A549 (cell line): ENCODE measurements at regions of chr3 and their contacts with region 1.

Region 1: GRCh38 chr3:156535162-156535627 is 19.7 kb downstream of the SSR3 start:
- DNase-seq: peak; percentile 62 to 87
- ATAC-seq: peak; percentile 93 to 94
- H3K4me3 ChIP-seq: no peak overlapping the region
- H3K27ac ChIP-seq: peak overlapping the region; percentile 31 to 73
- H3K4me1 ChIP-seq: peaks cover 41% of the 10 kb centered on the region
- CTCF ChIP-seq: peak; percentile 38
- EP300 ChIP-seq: no peak
- POLR2A ChIP-seq: no peak
- RAD21 ChIP-seq: peak; percentile 43 to 60; a peak in 4 of 5 replicates

Region 2: GRCh38 chr3:156233876-156234275 is 301.3 kb before region 1 on chr3:
- CTCF ChIA-PET with region 1: no interaction called
- POLR2A ChIA-PET with region 1: no interaction called
- DNase-seq: no peak
- ATAC-seq: no peak
- H3K4me3 ChIP-seq: no peak overlapping the region
- H3K27ac ChIP-seq: no peak overlapping the region
- H3K4me1 ChIP-seq: no peaks in the 10 kb centered on the region
- CTCF ChIP-seq: no peak
- EP300 ChIP-seq: no peak
- POLR2A ChIP-seq: no peak
- RAD21 ChIP-seq: no peak

Region 3: DNA sequence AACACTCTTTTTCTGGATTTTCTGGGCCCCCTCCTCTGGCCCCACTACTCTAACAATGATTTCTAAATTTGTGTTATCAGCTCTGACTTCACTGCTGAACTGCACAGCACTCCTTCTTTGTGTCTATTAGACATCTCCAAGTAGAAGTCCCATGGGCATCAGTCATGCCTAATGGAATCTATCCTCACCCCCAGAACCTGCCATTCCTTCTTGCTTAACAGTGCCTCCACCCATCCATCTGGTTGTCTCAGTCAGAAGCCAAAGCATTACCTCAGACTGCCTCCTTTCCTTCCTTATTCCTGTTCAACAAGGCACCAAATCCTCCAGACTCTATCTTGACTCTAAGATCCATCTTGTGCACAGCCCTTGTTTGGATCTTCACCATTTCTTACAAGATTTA is 16.5 kb before region 1 on chr3:
- CTCF ChIA-PET with region 1: interaction called, 11 read pairs
- POLR2A ChIA-PET with region 1: no interaction called
- DNase-seq: no peak
- ATAC-seq: no peak
- H3K4me3 ChIP-seq: no peak overlapping the region
- H3K27ac ChIP-seq: no peak overlapping the region
- H3K4me1 ChIP-seq: peaks cover 5% of the 10 kb centered on the region
- CTCF ChIP-seq: no peak
- EP300 ChIP-seq: no peak
- POLR2A ChIP-seq: no peak
- RAD21 ChIP-seq: no peak

Region 4: DNA sequence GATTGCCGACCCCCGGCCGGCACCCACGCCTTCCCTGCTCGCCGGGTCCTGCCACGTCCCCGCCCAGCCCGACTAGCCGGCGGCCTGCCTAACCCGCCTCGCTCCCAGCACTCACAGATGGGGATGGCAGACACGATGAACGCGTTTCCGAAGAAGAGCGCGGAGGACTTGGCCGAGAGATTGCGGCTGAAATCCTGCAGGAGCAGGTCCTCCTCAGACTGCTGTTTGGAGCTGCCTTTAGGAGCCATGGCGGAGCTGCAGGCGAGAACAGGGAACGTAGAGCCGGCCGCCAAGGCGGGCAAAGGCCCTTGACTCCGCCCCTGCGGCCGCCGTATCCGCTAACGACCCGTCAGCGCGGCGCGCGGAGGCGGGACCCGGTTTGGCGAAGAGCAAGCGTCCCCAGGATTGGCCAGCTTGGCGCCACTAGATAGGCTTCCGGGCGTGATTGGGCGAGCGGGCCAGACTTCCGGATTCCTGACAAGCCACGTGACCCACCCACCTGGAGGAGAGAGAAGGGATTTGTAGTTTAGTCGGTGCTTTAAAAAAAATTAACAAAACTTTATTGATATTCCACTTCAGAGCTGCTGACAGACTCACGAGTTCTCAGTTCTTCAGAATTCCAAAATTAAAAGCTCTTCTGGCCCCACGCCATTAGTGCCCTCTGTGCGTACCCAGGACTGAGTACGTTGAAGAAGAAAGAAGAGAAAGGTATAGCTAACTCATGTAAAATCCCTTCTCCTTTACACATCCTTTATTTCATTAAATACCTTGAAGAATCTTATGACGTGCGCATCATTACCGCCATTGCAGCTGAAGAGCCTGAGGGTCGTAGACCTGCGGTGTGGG is 19.9 kb after region 1 on chr3 and contains the start of gene SSR3:
- CTCF ChIA-PET with region 1: interaction called, 16 read pairs
- POLR2A ChIA-PET with region 1: interaction called, 10 read pairs
- DNase-seq: peak; percentile 92 to 99
- ATAC-seq: peak; percentile 99 to 100
- H3K4me3 ChIP-seq: peak within 1 kb of the TSS; percentile 61
- H3K27ac ChIP-seq: peak within 1 kb of the TSS; percentile 83 to 93
- H3K4me1 ChIP-seq: peaks cover 16% of the 10 kb centered on the region; the same call in 2 of the 3 replicates
- CTCF ChIP-seq: no peak
- EP300 ChIP-seq: no peak
- POLR2A ChIP-seq: peak; percentile 76
- RAD21 ChIP-seq: no peak
- polyA plus RNA-seq, gene SSR3: 187 and 242 TPM in 2 replicates

Region 5: DNA sequence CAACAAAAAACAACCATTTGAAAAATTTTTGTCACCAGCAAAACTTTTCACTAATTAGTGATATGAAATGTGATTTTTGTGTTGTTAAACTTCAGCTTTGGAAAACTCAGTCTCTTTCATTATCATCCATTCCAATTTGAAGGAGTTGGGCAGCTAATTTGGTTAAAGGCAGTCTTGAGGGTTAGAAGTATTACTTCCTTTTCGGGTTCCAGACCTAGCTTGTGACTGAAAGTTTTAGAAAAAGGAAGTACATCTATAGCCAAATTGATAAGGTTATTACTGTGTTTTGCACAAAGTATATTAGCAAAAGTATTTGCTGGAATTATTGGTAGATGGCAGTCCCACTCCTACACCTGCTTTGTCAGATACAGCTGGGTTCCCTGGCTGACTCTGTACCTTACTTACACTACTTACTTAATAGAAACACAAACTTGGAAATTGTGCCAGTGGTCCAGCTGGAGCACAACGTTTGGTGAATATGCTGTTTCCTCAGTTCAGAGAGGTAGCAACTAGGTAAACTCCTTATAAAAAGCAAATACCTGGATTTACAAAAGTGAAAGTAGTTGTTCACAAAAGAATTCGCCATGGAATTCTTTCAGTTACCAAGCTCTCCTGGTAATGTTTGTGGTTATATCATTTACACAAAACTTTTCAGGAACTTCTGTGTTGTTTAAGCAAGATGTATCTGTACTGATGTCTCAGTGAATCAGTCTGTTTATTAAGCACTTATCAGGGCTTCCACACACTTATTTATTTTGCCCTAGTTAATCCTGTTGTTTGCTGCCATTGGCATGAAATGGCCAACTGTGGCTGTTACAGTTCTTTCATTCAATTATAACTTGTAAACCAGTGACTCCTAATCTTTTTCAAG is 170.8 kb after region 1 on chr3:
- CTCF ChIA-PET with region 1: no interaction called
- POLR2A ChIA-PET with region 1: no interaction called
- DNase-seq: no peak
- ATAC-seq: peak in 1 of 2 experiments; percentile 10; a peak in 2 of 6 replicates
- H3K4me3 ChIP-seq: 0 out of 3 replicates have a peak overlapping the region, but pooled peaks have one; percentile 5
- H3K27ac ChIP-seq: peak overlapping the region in 1 of 2 experiments; percentile 51; a peak in 3 of 6 replicates
- H3K4me1 ChIP-seq: peaks cover 40% of the 10 kb centered on the region
- CTCF ChIP-seq: no peak
- EP300 ChIP-seq: no peak
- POLR2A ChIP-seq: no peak
- RAD21 ChIP-seq: no peak